PC-9 (cell line): ENCODE measurements at regions of chr4 and their contacts with region 1.

Region 1: GRCh38 chr4:83771113-83771705 is 235.3 kb downstream of the GPAT3 start:
- DNase-seq: peak in 1 of 2 experiments; percentile 51
- H3K4me3 ChIP-seq: no peak overlapping the region
- H3K27ac ChIP-seq: no peak overlapping the region
- H3K4me1 ChIP-seq: no peaks in the 10 kb centered on the region
- H3K27me3 ChIP-seq: no peaks in the 10 kb centered on the region
- CTCF ChIP-seq: peak; percentile 73

Region 2: DNA sequence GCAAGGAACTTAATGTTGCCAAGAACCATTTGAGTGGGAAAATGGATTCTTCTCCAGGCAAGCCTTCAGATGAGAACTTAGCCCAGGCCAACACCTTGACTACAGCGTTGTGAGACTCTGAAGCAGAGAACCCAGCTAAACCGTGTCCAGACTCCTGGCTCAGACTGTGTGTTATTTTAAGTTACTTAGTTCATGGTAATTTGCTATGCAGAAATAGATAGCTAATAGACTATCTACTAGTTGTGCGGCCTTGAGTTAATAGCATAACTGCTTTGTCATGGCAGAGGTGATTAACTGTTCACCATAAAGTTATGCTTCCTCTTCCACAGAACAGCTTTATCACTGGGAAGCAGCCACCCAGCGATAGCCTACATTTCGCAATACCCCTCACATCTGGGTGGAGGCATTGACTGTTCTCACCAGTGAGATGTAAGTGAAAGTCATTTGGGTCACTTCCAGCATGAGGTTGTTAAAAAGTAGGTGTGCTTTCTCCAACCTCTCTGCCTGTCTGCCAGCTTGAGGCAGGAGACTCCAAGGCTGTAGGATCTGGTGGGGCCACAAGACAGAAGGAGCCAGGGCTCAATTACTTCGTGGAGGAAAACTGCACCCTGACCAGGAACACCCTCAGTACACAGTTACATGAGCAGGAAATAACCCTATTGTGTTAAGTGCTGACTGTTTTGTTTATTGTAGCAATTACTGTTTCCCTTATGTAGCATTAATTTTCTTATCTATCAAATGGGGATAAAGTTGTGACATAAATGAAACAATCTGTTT is 141.1 kb before region 1 on chr4:
- CTCF ChIA-PET with region 1: interaction called, 10 read pairs
- POLR2A ChIA-PET with region 1: no interaction called
- intact Hi-C with region 1: no loop called
- DNase-seq: peak in 1 of 2 experiments; percentile 5
- H3K4me3 ChIP-seq: no peak overlapping the region
- H3K27ac ChIP-seq: no peak overlapping the region
- H3K4me1 ChIP-seq: peaks cover 14% of the 10 kb centered on the region
- H3K27me3 ChIP-seq: no peaks in the 10 kb centered on the region
- CTCF ChIP-seq: no peak

Region 3: DNA sequence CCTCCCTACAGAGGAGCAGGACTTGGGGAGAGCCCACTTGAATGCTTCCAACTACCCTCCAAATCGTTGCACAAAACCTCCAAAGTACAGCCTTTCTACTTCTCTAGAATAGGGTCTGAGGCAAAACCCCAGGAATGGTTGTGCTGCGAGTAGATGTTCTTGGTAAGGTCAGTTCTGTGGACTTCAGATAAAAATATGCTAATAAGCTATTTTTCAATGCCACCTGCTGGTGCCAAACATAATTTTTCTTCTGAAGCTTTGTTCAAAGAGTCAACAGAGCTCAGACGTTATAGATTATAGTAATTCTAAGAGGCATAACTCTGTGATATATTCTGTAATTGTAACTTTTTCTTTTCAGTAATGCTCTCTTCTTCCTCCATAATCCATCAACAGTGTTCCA is 190.4 kb after region 1 on chr4:
- CTCF ChIA-PET with region 1: interaction called, 6 read pairs
- POLR2A ChIA-PET with region 1: no interaction called
- intact Hi-C with region 1: loop called (anchors 2 kb)
- DNase-seq: peak in 1 of 2 experiments; percentile 0
- H3K4me3 ChIP-seq: no peak overlapping the region
- H3K27ac ChIP-seq: no peak overlapping the region
- H3K4me1 ChIP-seq: no peaks in the 10 kb centered on the region
- H3K27me3 ChIP-seq: no peaks in the 10 kb centered on the region
- CTCF ChIP-seq: peak; percentile 55; the same call in 1 of the 2 replicates

Region 4: DNA sequence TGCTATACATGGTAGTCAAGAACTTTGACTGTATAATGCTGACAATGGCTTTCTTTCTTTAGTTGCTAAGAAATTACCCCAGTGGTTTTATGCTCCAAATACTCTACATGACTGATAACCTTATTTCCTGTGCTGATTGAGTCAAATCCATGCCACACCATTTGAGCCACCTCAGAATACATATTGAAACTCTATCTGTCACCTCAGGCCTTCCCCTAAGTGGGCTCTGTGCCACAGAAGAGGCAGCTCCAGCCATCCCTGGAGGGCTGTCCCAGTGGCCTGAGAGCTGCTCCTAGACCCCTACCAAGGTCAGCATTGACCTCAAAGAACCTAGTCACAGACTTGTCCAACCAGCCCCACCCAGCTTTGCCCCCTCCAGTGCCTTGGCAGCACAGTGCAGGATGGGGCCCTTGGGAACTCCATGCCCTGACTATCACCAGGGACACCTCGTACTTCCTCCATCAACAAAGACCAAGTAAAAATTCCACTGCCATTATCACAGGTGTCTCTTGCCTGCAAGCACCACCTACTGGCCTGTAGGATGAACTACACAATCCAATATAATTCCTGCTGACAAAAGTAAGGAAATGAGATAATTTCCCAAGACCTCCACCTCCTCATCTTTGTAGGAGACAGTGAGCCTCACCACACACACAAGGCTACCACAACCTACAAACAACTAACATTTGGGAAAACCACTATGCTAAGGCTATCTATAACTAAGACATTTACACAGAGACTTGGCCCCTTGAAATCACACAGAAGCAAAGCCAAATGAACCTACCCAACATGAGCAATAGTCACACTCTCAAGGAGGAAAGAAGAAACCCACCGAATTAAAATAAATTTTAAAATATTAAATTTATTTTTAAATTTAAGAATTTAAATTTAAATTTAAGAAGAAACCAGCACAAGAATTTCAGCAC is 488.0 kb after region 1 on chr4:
- CTCF ChIA-PET with region 1: no interaction called
- POLR2A ChIA-PET with region 1: no interaction called
- intact Hi-C with region 1: loop called (anchors 5 kb)
- DNase-seq: no peak
- H3K4me3 ChIP-seq: no peak overlapping the region
- H3K27ac ChIP-seq: no peak overlapping the region
- H3K4me1 ChIP-seq: no peaks in the 10 kb centered on the region
- H3K27me3 ChIP-seq: no peaks in the 10 kb centered on the region
- CTCF ChIP-seq: peak; percentile 72